ENCODE measurements at regions of chr5 and their contacts with region 1.

Region 1: DNA sequence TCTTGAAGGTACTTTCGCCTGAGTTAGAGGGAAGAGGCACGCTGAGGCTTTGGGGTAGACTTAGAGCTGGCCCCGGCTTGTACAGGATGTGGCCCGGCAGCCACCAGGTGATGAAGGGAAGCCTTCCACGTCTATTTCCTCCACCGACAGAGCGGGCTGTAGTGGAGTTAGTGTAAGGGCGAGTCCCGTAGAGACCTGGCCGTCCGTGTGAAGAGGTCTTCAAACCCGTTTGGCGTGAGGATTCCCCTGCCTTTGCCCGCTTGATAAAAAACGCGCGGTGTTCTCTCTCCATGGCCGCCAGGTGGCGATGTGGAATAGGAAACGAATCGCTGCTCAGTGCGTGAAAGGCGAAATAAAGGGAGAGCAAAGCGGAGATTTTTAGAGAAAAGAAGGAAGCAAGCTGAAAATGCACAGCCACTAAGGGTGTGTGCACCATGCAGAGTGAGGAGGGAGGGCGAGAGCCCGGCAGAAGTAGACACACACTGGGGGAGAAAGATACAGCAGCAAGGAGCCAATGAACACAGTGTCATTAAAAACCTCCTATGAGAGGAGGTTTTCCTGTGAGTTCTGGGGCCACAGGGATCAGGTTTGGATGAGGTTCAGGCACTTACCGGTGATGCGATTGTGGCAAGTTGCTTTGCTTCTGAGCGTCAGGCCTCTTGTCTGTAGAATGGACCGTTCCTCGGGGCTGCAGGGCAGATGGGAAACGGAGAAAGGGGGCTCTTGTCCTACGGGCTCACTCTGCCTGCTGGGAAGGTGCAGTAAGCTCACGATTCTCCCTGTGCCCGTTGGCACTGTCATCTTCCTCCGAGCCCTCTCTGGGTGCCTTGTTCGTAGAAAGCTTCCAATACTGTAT is 34.2 kb downstream of the STC2 start:
- DNase-seq: no peak
- H3K4me3 ChIP-seq: no peak overlapping the region
- H3K27me3 ChIP-seq: no peaks in the 10 kb centered on the region
- CTCF ChIP-seq: peak; percentile 82

Region 2: GRCh38 chr5:172770675-172771438 is 523.2 kb before region 1 on chr5 and contains the start of gene DUSP1:
- CTCF ChIA-PET with region 1: no interaction called
- POLR2A ChIA-PET with region 1: no interaction called
- DNase-seq: peak; percentile 82
- H3K4me3 ChIP-seq: peak within 1 kb of the TSS; percentile 82
- H3K27me3 ChIP-seq: no peaks in the 10 kb centered on the region
- CTCF ChIP-seq: peak; percentile 31; the same call in 1 of the 2 replicates
- polyA plus RNA-seq, gene DUSP1: 252 and 432 TPM in 2 replicates

Region 3: GRCh38 chr5:173271419-173271818 is 22.6 kb before region 1 on chr5:
- CTCF ChIA-PET with region 1: no interaction called
- POLR2A ChIA-PET with region 1: no interaction called
- DNase-seq: no peak
- H3K4me3 ChIP-seq: no peak overlapping the region
- H3K27me3 ChIP-seq: peaks cover 12% of the 10 kb centered on the region
- CTCF ChIP-seq: no peak

Region 4: DNA sequence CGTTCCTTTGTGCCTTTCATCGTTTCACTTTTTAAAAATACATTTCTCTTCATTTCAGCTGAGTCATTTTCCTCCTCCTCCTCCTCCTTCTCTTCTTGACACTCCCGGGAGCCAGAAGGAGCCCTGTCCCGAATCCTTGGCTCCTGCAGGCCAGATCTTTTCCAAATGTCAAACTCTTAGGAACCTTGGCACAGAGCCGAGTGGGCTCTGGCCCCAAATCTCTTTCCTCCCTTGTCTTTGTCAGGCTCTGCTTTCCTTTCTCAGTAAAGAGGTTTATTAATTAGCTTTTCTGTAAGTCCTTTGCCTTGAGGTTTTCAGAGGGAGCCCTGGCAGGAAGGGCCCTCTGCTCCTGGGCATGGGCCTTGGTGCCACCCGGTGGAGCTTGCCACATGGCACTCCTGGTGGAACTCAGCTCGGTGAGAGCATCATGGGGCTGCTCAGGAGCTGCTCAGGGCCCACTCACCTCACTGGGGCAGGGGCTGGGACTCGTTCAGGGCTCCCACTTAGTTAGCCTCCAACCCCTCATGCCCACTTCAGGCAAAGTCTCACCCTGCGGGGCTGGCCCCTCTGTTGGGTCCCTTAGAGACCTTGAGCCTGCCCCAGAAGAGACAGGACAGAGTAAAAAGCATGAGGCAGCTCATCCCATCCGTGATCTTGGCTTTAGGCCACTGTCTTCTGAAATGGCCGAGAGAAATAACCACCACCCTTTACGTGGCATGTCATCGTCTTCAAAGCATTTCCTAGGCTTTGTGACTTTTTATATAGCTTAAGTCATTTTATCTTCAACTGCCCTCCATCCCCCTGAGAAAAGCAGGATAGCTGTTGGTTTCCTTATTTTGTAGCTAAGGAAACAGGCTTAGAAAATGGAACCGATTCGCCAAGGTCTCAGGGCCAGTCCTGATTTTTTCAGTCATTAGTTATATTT is 17.1 kb after region 1 on chr5:
- CTCF ChIA-PET with region 1: interaction called, 18 read pairs
- POLR2A ChIA-PET with region 1: no interaction called
- DNase-seq: no peak
- H3K4me3 ChIP-seq: no peak overlapping the region
- H3K27me3 ChIP-seq: no peaks in the 10 kb centered on the region
- CTCF ChIP-seq: no peak

Region 5: GRCh38 chr5:173320259-173320658 is 26.2 kb after region 1 on chr5:
- CTCF ChIA-PET with region 1: interaction called, 36 read pairs
- POLR2A ChIA-PET with region 1: no interaction called
- DNase-seq: no peak
- H3K4me3 ChIP-seq: no peak overlapping the region
- H3K27me3 ChIP-seq: no peaks in the 10 kb centered on the region
- CTCF ChIP-seq: peak; percentile 28; the same call in 1 of the 2 replicates

Region 6: GRCh38 chr5:173331956-173332479 is 38.0 kb after region 1 on chr5:
- CTCF ChIA-PET with region 1: interaction called, 55 read pairs
- POLR2A ChIA-PET with region 1: no interaction called
- DNase-seq: no peak
- H3K4me3 ChIP-seq: no peak overlapping the region
- H3K27me3 ChIP-seq: no peaks in the 10 kb centered on the region
- CTCF ChIP-seq: peak; percentile 89

Region 7: DNA sequence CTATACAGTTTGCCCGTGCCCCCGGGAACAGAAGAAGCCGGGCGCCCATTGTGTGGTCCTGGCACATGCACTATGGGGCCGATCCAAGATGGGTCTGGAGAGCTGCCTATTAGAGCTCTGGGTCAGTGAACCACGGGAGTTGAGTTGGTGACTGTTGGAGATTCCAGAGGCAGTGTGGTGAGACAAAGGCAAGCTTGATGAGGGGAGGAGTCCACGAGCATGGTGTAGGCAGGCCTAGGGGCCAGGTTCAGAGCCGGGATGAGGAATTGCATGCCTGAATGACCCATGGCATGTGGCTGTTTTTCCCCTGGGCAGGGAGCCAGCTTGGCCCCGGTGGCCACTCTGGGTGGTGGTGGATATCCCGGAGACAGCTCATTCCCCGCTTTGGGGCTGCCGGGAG is 118.5 kb after region 1 on chr5:
- CTCF ChIA-PET with region 1: no interaction called
- POLR2A ChIA-PET with region 1: no interaction called
- DNase-seq: no peak
- H3K4me3 ChIP-seq: no peak overlapping the region
- H3K27me3 ChIP-seq: no peaks in the 10 kb centered on the region; the same call in 1 of the 2 replicates
- CTCF ChIP-seq: no peak

Region 8: GRCh38 chr5:173573126-173573960 is 279.3 kb after region 1 on chr5:
- CTCF ChIA-PET with region 1: interaction called, 91 read pairs
- POLR2A ChIA-PET with region 1: no interaction called
- DNase-seq: no peak
- H3K4me3 ChIP-seq: peak overlapping the region; percentile 6; the same call in 1 of the 2 replicates
- H3K27me3 ChIP-seq: no peaks in the 10 kb centered on the region
- CTCF ChIP-seq: peak; percentile 97

Region 9: DNA sequence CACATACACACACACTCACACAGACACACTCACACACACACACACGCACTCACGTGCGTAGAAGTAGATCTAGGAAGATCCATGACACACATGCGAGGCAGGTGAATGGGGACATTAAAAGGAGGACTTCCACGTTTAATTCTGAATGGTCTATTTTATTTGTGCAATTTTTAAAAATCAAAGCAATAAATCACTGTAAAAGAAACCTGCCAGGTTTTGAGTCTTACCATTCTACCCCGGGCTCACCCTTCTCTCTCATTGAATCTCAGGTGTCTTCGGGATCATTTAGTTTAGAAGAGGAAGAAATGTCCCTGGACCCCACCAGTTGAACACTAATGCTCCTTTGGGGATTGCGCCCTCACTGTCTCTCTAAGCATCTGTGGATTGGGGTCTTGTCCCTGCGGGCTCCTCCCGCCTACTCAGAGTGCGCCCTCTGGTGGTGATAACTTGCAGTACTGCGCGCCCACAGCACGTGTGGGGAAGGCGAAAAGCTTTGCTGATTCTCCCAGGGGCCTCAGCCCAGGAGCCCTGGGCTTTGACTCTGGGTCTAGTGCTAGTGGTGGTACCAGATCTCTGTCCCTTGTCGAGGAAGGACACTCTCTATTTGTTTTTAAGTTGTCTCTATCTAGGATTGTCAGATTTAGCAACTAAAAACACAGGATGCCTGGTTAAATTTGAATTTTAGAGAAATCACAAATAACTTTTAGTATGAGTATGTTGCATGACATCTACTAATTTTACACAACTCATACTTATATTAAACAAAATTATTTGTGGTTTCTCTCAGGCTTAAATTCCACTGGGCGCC is 287.6 kb after region 1 on chr5:
- CTCF ChIA-PET with region 1: interaction called, 22 read pairs
- POLR2A ChIA-PET with region 1: no interaction called
- DNase-seq: no peak
- H3K4me3 ChIP-seq: no peak overlapping the region
- H3K27me3 ChIP-seq: no peaks in the 10 kb centered on the region
- CTCF ChIP-seq: peak; percentile 80